ENCODE measurements at regions of chrX and their contacts with region 1.

Region 1: GRCh38 chrX:110146521-110146920 is 143.6 kb downstream of the TMEM164 start:
- DNase-seq: peak; percentile 36
- H3K4me3 ChIP-seq: no peak overlapping the region
- H3K27ac ChIP-seq: no peak overlapping the region
- H3K4me1 ChIP-seq: no peaks in the 10 kb centered on the region
- H3K27me3 ChIP-seq: no peaks in the 10 kb centered on the region
- CTCF ChIP-seq: peak; percentile 48
- POLR2A ChIP-seq: no peak

Region 2: DNA sequence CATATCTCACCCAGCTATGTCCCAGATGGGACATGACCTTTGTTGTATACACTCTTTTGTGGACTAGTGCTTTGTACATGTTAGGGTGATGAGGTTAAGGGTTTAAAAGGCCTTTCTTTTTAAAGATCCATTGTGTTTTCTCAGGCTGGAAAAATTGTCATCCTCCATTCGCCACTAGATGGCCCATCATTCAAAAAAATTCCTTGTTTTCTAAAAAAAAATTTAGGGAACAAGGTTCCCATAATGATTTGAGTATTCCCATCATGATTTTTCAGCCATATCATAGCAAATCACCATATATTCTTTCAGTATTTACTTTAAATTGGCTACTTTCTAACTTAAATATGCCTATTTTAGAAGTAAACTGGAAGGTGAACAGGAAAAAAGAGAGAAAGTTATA is 235.5 kb before region 1 on chrX:
- CTCF ChIA-PET with region 1: interaction called, 98 read pairs
- POLR2A ChIA-PET with region 1: no interaction called
- dilution Hi-C with region 1: no loop called
- intact Hi-C with region 1: loop called (anchors 1 kb)
- DNase-seq: peak; percentile 27
- H3K4me3 ChIP-seq: no peak overlapping the region
- H3K27ac ChIP-seq: no peak overlapping the region
- H3K4me1 ChIP-seq: no peaks in the 10 kb centered on the region
- H3K27me3 ChIP-seq: no peaks in the 10 kb centered on the region
- CTCF ChIP-seq: peak; percentile 17 to 18
- POLR2A ChIP-seq: no peak

Region 3: DNA sequence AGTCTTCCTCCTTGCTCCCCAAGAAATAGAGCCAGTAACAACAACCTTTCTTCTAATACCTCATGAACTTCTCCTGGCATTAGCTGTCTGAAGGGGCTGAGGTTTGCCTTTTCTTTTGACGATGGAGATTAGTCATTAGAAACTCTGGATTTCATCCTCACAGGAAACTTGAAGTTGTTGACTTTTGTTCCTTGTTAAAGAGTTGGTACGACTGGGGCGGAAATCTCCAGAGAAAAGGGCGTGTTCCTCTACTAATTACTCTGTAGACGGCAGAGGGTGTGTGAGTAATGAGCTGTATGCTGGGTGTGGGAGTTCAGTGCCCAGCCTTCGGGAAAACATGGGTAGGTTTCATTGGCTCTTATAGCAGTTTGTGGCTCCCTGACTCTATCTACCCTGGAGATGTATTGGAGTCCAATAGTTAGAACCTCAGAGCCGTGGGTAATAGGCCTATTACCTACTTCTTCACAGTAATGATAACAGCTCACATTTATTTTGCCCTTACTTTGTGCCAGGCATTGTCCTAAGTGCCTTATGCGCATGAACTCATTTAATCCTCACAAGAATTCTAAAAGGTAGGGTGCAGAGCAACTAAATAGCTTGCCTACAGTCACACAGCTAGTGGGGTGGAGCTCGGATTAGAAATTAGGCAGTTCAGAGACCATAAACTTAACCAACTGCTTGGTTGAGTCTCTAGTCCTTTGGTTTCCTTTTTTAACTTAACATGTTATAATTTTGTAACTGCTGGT is 120.2 kb before region 1 on chrX:
- CTCF ChIA-PET with region 1: interaction called, 11 read pairs
- POLR2A ChIA-PET with region 1: no interaction called
- dilution Hi-C with region 1: no loop called
- intact Hi-C with region 1: no loop called
- DNase-seq: peak; percentile 84
- H3K4me3 ChIP-seq: no peak overlapping the region
- H3K27ac ChIP-seq: peak overlapping the region; percentile 48
- H3K4me1 ChIP-seq: peaks cover 23% of the 10 kb centered on the region
- H3K27me3 ChIP-seq: no peaks in the 10 kb centered on the region
- CTCF ChIP-seq: no peak
- POLR2A ChIP-seq: no peak

Region 4: GRCh38 chrX:110133735-110134370 is 12.7 kb before region 1 on chrX:
- CTCF ChIA-PET with region 1: interaction called, 21 read pairs
- POLR2A ChIA-PET with region 1: no interaction called
- dilution Hi-C with region 1: no loop called
- intact Hi-C with region 1: no loop called
- DNase-seq: no peak
- H3K4me3 ChIP-seq: no peak overlapping the region
- H3K27ac ChIP-seq: no peak overlapping the region
- H3K4me1 ChIP-seq: no peaks in the 10 kb centered on the region
- H3K27me3 ChIP-seq: no peaks in the 10 kb centered on the region
- CTCF ChIP-seq: no peak
- POLR2A ChIP-seq: no peak

Region 5: DNA sequence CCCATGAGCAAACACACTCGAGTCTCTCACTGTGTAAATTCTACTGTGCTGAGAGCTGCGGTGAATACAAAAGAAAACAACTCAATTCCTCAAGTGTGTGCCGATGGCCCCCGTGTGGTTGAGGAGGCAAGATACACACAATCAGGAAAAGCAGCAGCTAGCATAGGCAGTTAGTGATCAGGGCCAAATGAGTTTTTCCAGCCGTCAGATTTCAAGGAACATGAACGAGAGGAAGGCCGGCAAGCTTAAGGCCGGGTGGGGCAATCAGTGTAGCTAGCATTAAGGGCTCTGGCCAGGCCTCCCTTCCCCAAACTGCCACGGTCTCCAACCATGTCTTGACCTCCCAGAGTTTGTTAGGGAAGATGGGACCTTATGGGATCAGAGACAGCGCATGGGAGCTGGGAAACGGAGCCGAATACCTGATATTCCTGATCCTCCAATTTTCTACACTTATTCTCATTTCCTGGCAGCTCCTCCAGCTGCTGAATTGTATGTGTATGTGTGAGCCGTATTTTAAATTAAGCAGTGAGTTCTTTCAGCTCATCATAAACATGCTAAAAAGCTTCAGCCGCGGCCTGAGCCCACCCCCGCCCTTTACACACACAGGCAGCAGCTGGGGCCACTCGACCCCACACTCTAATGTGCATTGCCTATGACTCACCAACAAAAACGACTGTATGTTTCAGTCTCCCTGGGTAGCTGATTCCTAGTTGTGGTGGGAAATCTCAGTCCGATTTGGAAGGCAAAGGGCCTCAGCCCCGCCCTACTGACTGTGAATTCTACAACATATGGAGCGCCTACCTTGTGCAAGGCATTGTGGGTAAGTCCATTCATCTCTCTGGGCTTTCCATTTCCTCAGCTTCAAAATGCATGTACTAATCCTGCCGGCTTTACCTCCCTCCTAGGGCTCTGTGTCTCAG is 272.1 kb after region 1 on chrX:
- CTCF ChIA-PET with region 1: interaction called, 77 read pairs
- POLR2A ChIA-PET with region 1: no interaction called
- dilution Hi-C with region 1: loop called (anchors 10 kb)
- intact Hi-C with region 1: no loop called
- DNase-seq: peak; percentile 30
- H3K4me3 ChIP-seq: no peak overlapping the region
- H3K27ac ChIP-seq: no peak overlapping the region
- H3K4me1 ChIP-seq: no peaks in the 10 kb centered on the region
- H3K27me3 ChIP-seq: peaks cover 0 to 3% of the 10 kb centered on the region in 2 experiments
- CTCF ChIP-seq: peak; percentile 25 to 49
- POLR2A ChIP-seq: no peak

Measured in endothelial cell of umbilical vein (primary cell).